CD14-positive monocyte (primary cell): ENCODE measurements at regions of chr12 and their contacts with region 1.

Region 1: DNA sequence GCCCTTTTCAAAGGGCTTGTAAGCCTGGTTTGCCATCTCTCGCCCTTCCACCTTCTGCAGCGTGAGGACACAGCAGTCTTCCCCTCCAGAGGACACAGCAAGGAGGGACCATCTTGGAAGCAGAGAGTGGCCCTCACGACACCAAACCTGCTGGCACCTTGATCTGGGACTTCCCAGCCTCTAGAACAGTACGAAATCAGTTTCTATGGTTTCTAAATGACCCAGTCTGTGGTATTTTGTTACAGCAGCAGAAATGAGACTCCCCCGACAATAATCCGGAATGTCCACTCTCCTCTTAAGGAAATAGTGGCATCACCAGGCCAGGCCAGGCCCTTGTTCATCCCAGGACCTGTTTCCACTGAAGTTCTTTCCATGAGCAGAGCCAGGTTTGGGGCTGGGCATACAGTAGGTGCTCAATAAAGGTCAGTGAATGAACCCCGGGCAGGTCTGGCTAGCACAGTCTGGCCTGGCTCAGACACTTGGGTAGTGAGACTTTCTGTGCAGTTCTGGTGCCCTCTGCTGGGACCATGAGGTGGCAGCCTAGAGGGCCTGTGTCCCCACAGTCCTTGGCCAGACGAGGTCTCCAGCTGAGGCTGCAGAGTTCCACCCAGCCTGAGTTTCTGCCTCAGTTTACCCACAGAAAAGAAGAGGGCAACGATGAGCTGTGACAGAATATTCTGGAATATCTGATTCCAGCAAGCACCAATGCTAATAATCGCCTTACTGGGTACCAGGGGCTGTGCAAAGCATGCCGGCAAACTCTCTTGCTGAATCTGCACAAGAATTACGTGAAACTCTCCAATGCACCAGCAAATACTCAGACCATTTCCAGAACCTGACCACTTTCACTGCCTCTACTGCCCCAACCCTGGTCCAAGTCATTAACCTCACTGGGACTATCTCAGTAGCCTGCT is 14.0 kb downstream of the ABCB9 start:
- DNase-seq: peak; percentile 71 to 86 (median 79)
- H3K4me3 ChIP-seq: no peak overlapping the region
- H3K4me3 Mint-ChIP-seq: no peak overlapping the region
- H3K27ac ChIP-seq: no peak overlapping the region
- H3K27ac Mint-ChIP-seq: peak overlapping the region in 4 of 7 donors; percentile 3 to 35 (median 12)
- H3K4me1 ChIP-seq: peaks cover 10 to 12% of the 10 kb centered on the region in 2 donors
- H3K4me1 Mint-ChIP-seq: peaks cover 22% of the 10 kb centered on the region
- H3K27me3 ChIP-seq: no peaks in the 10 kb centered on the region
- H3K27me3 Mint-ChIP-seq: peaks cover 0 to 4% (median 4%) of the 10 kb centered on the region in 3 donors
- CTCF ChIP-seq: peak; percentile 91

Region 2: DNA sequence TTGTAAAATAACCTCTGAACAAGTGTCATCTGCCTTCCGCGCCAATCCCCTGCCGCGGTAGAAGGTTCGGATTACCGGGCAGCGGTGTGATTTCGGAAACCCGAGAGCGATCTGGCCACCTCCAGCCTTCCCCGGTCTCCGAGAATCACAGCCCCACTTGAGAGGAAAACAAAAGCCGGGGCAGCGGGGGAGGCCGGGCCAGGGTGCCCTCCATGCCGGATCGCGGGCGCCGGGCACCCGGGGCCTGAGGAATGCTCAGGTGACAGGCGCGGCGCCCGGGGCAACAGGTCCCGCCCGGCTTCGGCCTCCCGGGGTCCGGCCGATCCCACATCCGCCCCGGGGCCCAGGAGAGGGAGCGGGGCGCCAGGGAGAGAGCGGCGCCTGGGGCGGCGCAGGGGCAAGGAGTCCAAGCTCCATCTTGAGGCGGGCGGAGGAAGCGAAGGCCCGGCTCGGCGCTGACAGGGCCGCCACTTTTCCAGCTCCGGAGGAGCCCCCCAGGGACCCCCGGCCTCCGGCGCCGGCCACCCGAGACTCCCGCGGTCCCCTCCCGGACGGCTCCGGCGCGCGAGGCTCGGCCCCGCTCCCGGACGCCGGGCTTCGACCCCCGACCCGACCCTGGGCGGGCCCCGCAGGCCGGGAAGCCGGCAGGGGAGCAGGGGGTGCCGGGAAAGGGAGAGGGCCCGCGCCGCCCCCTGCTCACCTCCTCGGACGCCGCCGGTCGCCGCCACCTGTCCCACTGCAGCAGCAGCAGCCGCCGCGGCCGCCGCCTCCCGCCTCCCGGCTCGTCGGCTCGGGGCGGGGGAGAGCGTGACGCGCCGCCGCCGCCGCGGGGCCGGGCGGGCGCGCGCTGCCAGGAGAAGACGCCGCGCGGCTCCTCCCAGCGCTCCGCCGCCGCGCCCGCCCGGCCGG is 530.2 kb before region 1 on chr12 and contains the start of gene CLIP1:
- intact Hi-C with region 1: no loop called
- DNase-seq: peak in 2 of 3 donors; percentile 44 to 46
- H3K4me3 ChIP-seq: peak within 1 kb of the TSS; percentile 84 to 93 (median 91)
- H3K4me3 Mint-ChIP-seq: peak within 1 kb of the TSS; percentile 89 to 96
- H3K27ac ChIP-seq: peak within 1 kb of the TSS; percentile 97 to 98
- H3K27ac Mint-ChIP-seq: peak within 1 kb of the TSS; percentile 93 to 98 (median 98)
- H3K4me1 ChIP-seq: peaks cover 28 to 32% of the 10 kb centered on the region in 2 donors
- H3K4me1 Mint-ChIP-seq: peaks cover 22% of the 10 kb centered on the region
- H3K27me3 ChIP-seq: no peaks in the 10 kb centered on the region
- H3K27me3 Mint-ChIP-seq: peaks cover 2 to 3% (median 2%) of the 10 kb centered on the region in 3 donors
- CTCF ChIP-seq: peak; percentile 61
- polyA plus RNA-seq, gene CLIP1: 6.7 to 50.9 (median 12.9) TPM

Region 3: DNA sequence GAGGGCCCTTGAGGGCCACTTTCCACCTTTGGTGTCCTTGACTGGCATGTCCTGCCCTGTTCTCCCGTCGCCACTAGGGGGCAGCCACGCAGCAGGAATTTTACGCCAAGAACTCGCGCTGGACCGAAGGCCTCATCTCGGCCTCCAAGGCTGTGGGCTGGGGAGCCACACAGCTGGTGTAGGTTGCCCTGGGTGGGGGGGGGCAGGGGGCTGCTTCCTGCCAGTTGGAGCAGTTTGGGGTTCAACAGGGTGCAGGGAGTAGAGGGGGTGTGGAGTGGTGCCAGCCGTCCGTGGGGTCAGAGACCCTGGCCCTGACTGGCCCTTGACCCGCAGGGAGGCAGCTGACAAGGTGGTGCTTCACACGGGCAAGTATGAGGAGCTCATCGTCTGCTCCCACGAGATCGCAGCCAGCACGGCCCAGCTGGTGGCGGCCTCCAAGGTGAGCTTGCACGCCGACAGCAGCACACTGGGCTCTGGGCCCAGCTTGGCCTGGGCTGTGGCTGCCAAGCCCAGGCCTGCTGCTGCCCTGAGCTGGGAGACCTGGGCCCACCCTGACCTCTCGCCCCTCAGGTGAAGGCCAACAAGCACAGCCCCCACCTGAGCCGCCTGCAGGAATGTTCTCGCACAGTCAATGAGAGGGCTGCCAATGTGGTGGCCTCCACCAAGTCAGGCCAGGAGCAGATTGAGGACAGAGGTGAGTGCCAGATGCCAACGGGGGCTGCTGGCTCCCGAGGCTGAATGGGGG is 91.7 kb before region 1 on chr12:
- intact Hi-C with region 1: loop called (anchors 1 kb)
- DNase-seq: peak; percentile 74 to 80 (median 78)
- H3K4me3 ChIP-seq: no peak overlapping the region
- H3K4me3 Mint-ChIP-seq: no peak overlapping the region
- H3K27ac ChIP-seq: no peak overlapping the region
- H3K27ac Mint-ChIP-seq: peak overlapping the region in 2 of 7 donors; percentile 24 to 35
- H3K4me1 ChIP-seq: peaks cover 0 to 4% of the 10 kb centered on the region in 2 donors
- H3K4me1 Mint-ChIP-seq: no peaks in the 10 kb centered on the region
- H3K27me3 ChIP-seq: no peaks in the 10 kb centered on the region
- H3K27me3 Mint-ChIP-seq: peaks cover 0 to 2% (median 1%) of the 10 kb centered on the region in 3 donors
- CTCF ChIP-seq: peak; percentile 92

Region 4: GRCh38 chr12:122880668-122881067 is 71.6 kb before region 1 on chr12:
- intact Hi-C with region 1: loop called in 1 of 2 experiments (anchors 5 kb)
- DNase-seq: peak in 1 of 3 donors; percentile 32
- H3K4me3 ChIP-seq: no peak overlapping the region
- H3K4me3 Mint-ChIP-seq: no peak overlapping the region
- H3K27ac ChIP-seq: no peak overlapping the region
- H3K27ac Mint-ChIP-seq: peak overlapping the region in 1 of 7 donors; percentile 34
- H3K4me1 ChIP-seq: peaks cover 25 to 61% of the 10 kb centered on the region in 2 donors
- H3K4me1 Mint-ChIP-seq: peaks cover 80% of the 10 kb centered on the region
- H3K27me3 ChIP-seq: no peaks in the 10 kb centered on the region
- H3K27me3 Mint-ChIP-seq: peaks cover 5 to 46% (median 11%) of the 10 kb centered on the region in 3 donors
- CTCF ChIP-seq: peak; percentile 49

Region 5: GRCh38 chr12:123171967-123172366 is 219.7 kb after region 1 on chr12:
- intact Hi-C with region 1: no loop called
- DNase-seq: no peak
- H3K4me3 ChIP-seq: no peak overlapping the region
- H3K4me3 Mint-ChIP-seq: no peak overlapping the region
- H3K27ac ChIP-seq: no peak overlapping the region
- H3K27ac Mint-ChIP-seq: no peak overlapping the region
- H3K4me1 ChIP-seq: no peaks in the 10 kb centered on the region
- H3K4me1 Mint-ChIP-seq: no peaks in the 10 kb centered on the region
- H3K27me3 ChIP-seq: no peaks in the 10 kb centered on the region
- H3K27me3 Mint-ChIP-seq: no peaks in the 10 kb centered on the region
- CTCF ChIP-seq: no peak